ENCODE measurements at regions of chr5 and their contacts with region 1.

Region 1: DNA sequence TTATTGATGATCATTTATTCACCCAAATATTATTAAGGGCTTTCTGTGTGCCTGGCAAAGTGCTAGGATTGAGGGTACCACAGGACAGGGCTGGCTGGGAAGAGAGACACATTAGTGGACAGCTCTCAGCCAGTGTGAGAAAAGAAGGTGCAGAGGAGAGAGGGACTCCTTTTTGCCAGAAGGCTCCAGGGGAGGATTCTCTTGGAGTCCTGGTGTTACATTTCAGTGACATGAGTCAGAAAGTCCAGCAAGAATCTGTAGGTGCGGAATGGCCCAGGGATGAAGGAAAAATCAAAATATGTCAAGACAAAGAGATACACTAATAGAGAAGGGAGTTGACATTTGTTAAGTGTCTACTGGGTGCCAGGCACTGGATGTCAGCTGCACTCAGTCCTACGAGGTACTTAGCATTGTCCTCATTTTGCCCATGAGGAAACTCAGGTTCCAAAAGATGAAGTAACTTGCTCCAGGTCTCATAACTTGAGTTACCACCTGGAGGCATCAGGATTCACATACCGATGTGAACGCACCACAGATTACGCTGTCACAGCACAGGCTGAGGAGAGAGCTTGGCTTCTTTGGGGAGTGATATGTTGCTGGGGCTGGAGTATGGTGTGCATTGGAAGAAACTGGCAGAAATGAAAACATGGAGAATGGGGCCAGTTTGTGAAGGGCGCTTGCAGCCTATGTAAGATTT is 60.5 kb downstream of the RASGRF2 start:
- DNase-seq: peak; percentile 55
- H3K27ac ChIP-seq: no peak overlapping the region
- CTCF ChIP-seq: no peak

Region 2: GRCh38 chr5:80761176-80761575 is 259.4 kb before region 1 on chr5:
- CTCF ChIA-PET with region 1: interaction called, 15 read pairs
- POLR2A ChIA-PET with region 1: no interaction called
- DNase-seq: no peak
- H3K27ac ChIP-seq: no peak overlapping the region
- CTCF ChIP-seq: no peak

Region 3: DNA sequence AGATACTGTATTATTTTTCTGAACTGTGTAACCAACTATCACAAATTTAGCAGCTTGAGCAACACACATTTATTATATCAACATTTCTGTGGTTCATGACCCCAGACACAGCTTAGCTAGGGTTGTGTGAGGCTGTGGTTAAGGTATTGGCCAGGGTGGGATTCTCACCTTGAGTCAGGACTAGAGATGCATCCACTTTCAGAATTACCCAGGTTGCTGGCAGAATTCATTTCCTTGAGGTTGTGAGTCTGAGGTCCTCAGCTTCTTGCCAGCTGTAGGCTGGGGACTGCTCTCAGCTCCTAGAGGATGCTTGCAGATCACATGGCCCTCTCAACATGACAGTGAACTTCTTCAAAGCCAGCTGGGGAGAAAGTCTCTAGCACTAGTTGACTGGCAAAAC is 182.9 kb before region 1 on chr5:
- CTCF ChIA-PET with region 1: no interaction called
- POLR2A ChIA-PET with region 1: no interaction called
- DNase-seq: no peak
- H3K27ac ChIP-seq: no peak overlapping the region
- CTCF ChIP-seq: no peak

Region 4: GRCh38 chr5:80998590-80998979 is 22.0 kb before region 1 on chr5:
- CTCF ChIA-PET with region 1: no interaction called
- POLR2A ChIA-PET with region 1: no interaction called
- DNase-seq: no peak
- H3K27ac ChIP-seq: no peak overlapping the region
- CTCF ChIP-seq: no peak

Measured in RWPE1 (cell line).